ENCODE measurements at regions of chr1 and their contacts with region 1.

Region 1: DNA sequence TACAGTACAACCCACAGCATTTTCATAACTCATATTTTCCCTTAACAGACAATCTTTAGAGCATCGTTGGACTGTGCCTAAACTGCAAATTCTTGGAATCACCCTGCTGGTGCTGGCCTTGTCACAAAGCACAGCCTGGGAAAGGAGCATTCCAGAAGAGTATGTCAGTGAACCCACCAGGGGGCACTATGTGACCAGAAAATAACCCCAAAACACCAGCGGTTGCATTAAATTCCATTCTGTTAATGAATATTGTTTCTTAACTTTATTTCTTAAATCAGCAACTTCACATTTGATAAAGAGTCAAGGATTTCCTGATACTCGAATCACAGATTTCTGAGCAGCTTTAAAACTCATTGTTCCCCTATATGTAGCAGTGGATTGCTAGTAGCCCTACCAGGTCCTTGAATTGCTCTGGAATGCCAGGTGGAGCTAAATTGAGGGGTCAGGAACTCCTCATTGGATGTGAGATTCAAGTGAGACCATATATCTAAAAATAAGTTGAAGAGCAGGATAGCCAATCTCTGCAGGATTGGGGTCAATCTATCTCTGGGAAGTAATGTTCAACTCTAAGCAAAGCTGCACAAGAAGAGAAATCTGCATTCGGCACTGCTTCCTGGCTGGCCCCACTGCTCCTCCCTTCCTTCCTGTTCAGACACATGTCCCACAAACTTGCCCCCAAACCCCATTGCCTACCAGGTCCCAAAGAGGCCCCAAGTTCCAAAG is 12.7 kb upstream of the RAB4A start:
- DNase-seq: peak; percentile 76
- H3K4me3 ChIP-seq: no peak overlapping the region
- H3K27ac ChIP-seq: no peak overlapping the region
- H3K4me1 ChIP-seq: peaks cover 11% of the 10 kb centered on the region
- CTCF ChIP-seq: peak; percentile 97

Region 2: DNA sequence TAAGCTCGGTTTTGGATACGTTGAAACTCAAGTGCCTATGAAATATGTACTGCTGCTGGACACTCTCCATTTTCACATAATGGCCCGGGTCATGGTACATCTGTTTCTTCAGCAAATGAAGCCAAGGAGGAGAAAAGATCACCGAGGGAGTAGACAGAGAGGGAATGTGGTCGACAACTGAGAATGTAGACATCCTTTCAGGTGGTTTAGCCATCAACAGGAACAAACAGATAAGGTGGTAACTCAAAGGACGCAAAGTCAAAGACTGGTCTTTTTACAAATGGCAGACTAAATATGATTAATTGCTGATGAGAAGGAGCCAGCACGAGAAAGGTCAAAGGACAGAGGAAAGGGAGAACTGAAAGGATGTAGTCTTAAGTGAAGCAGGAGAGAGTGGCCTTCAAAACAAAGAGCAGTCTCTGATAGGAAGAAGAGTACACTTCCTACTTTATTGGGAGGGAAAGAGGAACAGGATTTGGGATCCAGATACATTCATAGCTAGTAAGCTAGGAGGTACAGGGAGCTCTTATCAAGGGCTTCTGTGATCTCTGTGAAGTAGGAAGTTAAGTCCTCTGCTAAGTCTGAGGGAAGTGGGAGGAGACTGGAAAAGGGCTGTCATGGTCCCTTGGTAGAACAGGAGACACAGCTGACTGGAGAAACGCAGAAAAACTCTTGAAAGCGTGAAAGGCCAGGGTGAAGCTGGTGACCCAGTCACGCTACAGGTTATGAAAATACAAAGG is 221.6 kb after region 1 on chr1:
- CTCF ChIA-PET with region 1: interaction called, 10 read pairs
- POLR2A ChIA-PET with region 1: interaction called, 3 read pairs
- intact Hi-C with region 1: loop called (anchors 1 kb)
- DNase-seq: peak; percentile 76
- H3K4me3 ChIP-seq: no peak overlapping the region
- H3K27ac ChIP-seq: peak overlapping the region; percentile 26
- H3K4me1 ChIP-seq: peaks cover 31% of the 10 kb centered on the region
- CTCF ChIP-seq: no peak

Region 3: GRCh38 chr1:229514578-229515275 is 256.5 kb after region 1 on chr1:
- CTCF ChIA-PET with region 1: no interaction called
- POLR2A ChIA-PET with region 1: no interaction called
- intact Hi-C with region 1: loop called (anchors 1 kb)
- DNase-seq: peak; percentile 77
- H3K4me3 ChIP-seq: no peak overlapping the region
- H3K27ac ChIP-seq: no peak overlapping the region
- H3K4me1 ChIP-seq: no peaks in the 10 kb centered on the region
- CTCF ChIP-seq: peak; percentile 95